ENCODE measurements at regions of chr2 and their contacts with region 1.

Region 1: DNA sequence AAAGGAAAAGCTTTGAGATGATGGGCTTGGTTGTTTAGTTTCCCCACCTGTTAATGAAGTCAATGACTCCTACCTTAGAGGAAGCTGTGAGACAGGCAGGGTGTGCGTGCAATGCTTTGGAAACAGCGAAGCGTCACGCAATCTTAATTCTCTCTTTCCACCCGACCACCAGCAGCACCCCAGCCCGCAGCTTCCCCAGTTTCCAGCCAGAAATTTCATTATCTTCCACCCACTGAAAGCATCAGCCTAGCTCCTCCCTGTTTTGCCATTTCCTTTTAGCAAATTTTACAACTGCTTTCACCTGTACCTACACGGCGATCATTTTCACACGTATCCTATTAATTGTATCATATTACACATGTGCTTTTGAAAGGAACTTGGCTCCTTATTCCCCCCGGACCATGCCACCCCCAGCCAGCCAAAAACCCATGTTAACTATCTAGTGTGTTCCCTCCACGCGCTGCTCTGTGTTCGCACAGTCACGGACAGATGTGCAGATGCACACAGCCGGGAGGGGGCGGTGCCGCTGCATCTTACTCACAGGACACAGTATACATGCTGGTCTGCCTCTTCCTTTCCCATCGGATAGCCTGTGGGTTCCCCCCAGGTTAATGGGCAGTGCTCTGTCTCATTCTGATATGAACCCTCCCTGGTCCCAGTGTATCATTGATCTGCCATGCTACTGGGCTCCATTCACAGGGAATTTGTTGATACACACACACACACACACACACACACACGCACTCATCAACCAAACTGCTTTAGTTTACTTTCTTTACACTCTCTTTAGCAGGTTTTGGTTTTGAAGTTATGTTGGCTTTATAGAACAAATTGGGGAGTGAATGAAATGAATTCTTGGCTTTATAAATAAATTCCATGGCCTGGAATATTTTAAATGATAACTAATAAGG is 22.4 kb downstream of the CYP27C1 start:
- DNase-seq: peak; percentile 82
- ATAC-seq: peak; percentile 84
- H3K4me3 Mint-ChIP-seq: peak overlapping the region; percentile 26; the same call in 1 of the 2 replicates
- H3K27ac Mint-ChIP-seq: no peak overlapping the region
- H3K4me1 Mint-ChIP-seq: peaks cover 39% of the 10 kb centered on the region
- H3K27me3 Mint-ChIP-seq: no peaks in the 10 kb centered on the region
- CTCF ChIP-seq: 0 out of 2 replicates have a peak, but pooled peaks have one; percentile 26

Region 2: DNA sequence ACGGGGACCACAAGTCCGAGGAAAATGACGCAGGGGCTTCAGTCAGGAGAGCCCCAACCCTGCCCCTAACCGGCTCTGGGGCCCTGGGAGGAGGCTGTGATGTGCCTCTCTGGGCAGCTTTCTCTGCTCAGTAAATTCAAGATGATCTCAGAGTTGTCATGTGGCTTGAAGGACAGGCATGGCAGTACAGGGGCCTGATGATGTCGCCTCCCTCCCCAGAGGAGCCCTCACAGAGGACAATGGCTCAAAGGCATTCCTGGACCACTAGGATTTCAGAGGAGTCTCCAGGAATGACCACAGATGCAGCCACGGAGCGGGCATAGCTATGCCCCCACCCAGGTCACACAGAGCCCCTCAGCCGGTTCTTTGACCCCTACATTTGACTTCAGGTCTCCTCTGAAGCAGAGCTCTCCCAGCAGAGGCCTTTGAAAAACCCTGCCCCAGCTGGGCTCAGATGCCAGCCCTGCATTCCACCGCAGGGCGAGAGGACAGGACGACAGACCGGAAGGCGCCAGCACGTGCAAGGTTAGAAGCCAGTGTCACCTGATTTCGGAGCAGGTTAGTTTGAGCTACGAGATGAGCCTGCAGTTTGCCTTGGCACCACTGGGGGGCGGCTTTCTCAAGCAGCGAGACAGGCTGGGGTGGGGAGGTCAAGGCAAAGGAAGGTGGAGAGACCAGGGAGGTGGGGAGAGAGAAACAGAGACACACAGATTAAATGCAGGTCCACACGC is 129.9 kb before region 1 on chr2:
- CTCF ChIA-PET with region 1: interaction called, 11 read pairs
- POLR2A ChIA-PET with region 1: no interaction called
- DNase-seq: peak; percentile 80
- ATAC-seq: peak; percentile 75
- H3K4me3 Mint-ChIP-seq: no peak overlapping the region
- H3K27ac Mint-ChIP-seq: no peak overlapping the region
- H3K4me1 Mint-ChIP-seq: 0 out of 2 replicates have a peak, but pooled peaks cover 5% of the 10 kb centered on the region
- H3K27me3 Mint-ChIP-seq: no peaks in the 10 kb centered on the region
- CTCF ChIP-seq: peak; percentile 75

Region 3: DNA sequence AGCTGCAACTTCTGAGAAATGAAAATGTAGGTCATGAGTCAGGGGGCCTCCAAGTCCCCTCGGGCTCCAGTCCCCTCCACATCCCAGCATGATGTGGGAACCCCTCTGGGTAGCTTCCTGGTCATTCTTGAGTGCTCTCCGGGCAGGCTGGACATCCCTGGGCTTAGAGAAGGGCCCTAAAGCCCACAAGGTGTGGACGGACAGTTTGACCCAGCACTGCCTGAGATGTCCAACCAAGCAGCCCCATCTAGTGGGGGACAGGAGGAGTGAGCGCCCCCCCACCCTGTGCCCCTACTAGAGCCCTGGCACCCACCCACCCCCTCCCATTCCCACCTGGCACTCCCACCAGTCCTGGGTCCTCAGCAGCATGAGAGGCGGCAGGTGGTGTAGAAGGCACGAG is 23.6 kb before region 1 on chr2:
- CTCF ChIA-PET with region 1: interaction called, 18 read pairs
- POLR2A ChIA-PET with region 1: no interaction called
- DNase-seq: peak; percentile 43
- ATAC-seq: peak; percentile 65
- H3K4me3 Mint-ChIP-seq: no peak overlapping the region
- H3K27ac Mint-ChIP-seq: no peak overlapping the region
- H3K4me1 Mint-ChIP-seq: peaks cover 13% of the 10 kb centered on the region
- H3K27me3 Mint-ChIP-seq: no peaks in the 10 kb centered on the region; the same call in 1 of the 2 replicates
- CTCF ChIP-seq: no peak

Region 4: DNA sequence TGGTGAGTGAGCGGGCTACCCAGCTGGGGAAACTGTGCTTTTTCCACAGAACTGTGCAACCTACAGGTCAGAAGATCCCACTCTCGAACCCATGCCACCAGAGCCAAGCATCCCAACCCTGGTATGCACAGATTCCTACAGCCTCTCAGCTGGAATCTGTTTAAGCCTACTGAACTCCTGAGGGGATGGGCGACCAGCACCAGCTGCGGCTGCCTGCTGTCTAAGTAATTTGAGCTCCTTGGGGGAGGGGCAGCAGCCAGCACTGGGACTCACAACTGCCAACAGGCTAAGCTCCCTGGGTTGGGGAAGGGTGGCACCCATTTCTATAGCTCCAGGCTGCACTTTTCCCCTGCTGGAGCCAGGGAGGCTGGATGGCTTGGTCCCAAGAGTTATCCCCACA is 10.6 kb after region 1 on chr2:
- CTCF ChIA-PET with region 1: interaction called, 13 read pairs
- POLR2A ChIA-PET with region 1: no interaction called
- DNase-seq: peak; percentile 69
- ATAC-seq: peak; percentile 75
- H3K4me3 Mint-ChIP-seq: no peak overlapping the region
- H3K27ac Mint-ChIP-seq: no peak overlapping the region
- H3K4me1 Mint-ChIP-seq: peaks cover 45% of the 10 kb centered on the region
- H3K27me3 Mint-ChIP-seq: peaks cover 26% of the 10 kb centered on the region
- CTCF ChIP-seq: no peak

Region 5: DNA sequence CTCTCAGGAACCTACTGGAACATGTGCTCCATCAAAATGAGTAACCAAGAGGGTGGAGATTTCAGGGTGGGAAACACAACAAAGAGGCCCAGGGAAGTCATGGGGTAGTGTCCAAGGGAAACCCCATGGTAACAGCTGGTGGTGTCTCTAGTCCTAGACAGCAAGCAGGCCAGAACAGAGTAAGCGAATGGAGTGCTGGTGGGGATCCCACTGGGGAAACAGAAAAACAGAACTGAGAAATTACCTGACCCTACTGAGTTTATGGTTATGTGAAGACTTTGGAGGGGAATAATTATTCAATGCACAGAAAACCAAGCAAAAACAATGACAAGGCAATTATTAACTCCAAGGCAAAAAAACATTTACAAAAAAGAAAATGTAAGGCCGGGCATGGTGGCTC is 79.3 kb after region 1 on chr2:
- CTCF ChIA-PET with region 1: interaction called, 15 read pairs
- POLR2A ChIA-PET with region 1: no interaction called
- DNase-seq: no peak
- ATAC-seq: no peak
- H3K4me3 Mint-ChIP-seq: no peak overlapping the region
- H3K27ac Mint-ChIP-seq: no peak overlapping the region
- H3K4me1 Mint-ChIP-seq: no peaks in the 10 kb centered on the region
- H3K27me3 Mint-ChIP-seq: no peaks in the 10 kb centered on the region
- CTCF ChIP-seq: no peak

Region 6: GRCh38 chr2:127365211-127365643 is 167.5 kb after region 1 on chr2:
- CTCF ChIA-PET with region 1: interaction called, 10 read pairs
- POLR2A ChIA-PET with region 1: no interaction called
- DNase-seq: no peak
- ATAC-seq: peak; percentile 94
- H3K4me3 Mint-ChIP-seq: no peak overlapping the region
- H3K27ac Mint-ChIP-seq: no peak overlapping the region
- H3K4me1 Mint-ChIP-seq: peaks cover 30% of the 10 kb centered on the region
- H3K27me3 Mint-ChIP-seq: no peaks in the 10 kb centered on the region
- CTCF ChIP-seq: no peak

Region 7: GRCh38 chr2:127453392-127454171 is 255.9 kb after region 1 on chr2:
- CTCF ChIA-PET with region 1: interaction called, 15 read pairs
- POLR2A ChIA-PET with region 1: no interaction called
- DNase-seq: peak; percentile 28
- ATAC-seq: peak; percentile 72
- H3K4me3 Mint-ChIP-seq: no peak overlapping the region
- H3K27ac Mint-ChIP-seq: no peak overlapping the region
- H3K4me1 Mint-ChIP-seq: peaks cover 49% of the 10 kb centered on the region
- H3K27me3 Mint-ChIP-seq: no peaks in the 10 kb centered on the region
- CTCF ChIP-seq: no peak